GM12878 (cell line): ENCODE measurements at regions of chr19 and their contacts with region 1.

Region 1: DNA sequence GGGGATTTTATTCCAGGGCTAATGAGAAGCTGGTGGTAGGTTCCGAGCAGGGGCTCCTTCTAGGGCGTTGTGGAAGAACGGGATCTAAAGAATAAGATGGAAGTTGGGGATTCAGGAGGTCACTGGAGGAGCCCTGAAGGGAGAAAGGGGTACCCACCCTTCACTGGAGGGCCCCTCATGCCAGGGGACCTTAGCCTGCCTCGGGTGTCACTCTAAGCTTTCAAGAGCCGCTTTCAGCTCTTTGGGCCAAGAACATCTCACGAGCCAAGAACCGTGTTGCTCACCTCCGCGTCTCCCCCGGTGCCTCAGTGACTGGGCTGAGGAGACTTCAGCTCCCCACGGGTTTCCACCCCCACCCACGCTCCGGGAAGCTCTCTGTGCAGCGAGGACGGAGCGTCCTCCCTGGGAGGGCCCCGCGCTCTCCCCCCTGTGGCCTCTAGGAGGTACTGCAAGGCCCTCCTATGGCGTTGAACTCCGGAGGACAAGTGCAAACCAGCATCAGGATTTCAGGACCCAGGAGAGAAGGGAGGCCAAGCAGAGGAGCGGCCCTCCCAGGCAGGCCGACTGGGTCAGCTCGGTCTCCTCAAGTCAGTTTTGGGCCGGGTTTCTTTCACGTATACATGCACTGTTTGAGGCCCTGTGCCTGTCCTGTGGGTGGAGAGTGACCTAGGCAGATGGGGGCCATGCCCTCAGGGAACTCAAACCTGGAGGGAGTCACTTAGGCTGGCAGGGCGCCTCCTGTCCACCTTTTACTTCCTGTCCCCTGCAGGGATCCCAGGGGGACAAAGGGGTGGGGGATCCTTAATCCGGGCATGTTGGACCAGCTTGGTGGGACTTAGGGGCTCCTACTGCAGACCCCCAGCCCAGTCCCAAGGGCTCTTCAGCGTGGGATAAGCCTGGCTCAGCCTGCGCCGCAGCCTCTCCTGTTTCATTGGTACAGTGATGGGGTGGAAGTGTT is 5.1 kb upstream of the KRTDAP start:
- DNase-seq: no peak
- ATAC-seq: peak; percentile 98
- H3K4me3 ChIP-seq: no peak overlapping the region
- H3K27ac ChIP-seq: no peak overlapping the region
- H3K4me1 ChIP-seq: peaks cover 9% of the 10 kb centered on the region
- H3K27me3 ChIP-seq: peaks cover 0 to 2% of the 10 kb centered on the region in 2 experiments; a peak in 1 of 4 replicates
- CTCF ChIP-seq: peak; percentile 96 to 100 (median 98)
- EP300 ChIP-seq: no peak
- POLR2A ChIP-seq: no peak
- RAD21 ChIP-seq: peak; percentile 88

Region 2: DNA sequence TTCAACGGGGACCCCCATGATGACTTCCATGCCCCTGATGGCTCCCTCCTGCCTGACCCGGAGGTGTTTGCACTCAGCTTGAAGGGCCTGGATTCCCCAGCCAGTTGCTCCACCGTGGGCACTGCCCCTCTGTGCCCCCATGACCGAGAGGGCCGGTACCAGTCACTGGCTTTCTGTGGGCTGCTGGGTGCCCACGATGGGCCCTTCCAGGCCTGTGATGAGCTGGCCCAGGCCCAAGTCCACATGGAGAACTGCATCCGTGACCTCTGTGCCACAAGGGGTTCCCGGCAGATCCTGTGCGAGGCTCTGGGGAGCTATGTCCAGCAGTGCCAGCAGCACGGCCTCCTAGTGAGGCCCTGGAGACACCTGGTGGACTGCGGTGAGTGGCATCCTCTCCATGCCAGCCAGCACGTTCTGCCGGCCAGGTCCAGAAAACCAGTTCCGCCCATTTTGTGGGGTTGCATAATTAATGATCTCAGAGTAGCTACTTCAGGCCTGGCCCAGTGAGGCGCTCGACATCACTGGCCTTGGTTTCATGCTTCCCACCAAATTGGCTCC is 414.7 kb before region 1 on chr19:
- CTCF ChIA-PET with region 1: no interaction called
- POLR2A ChIA-PET with region 1: no interaction called
- RAD21 ChIA-PET with region 1: no interaction called
- SMC1A ChIA-PET with region 1: no interaction called
- in situ Hi-C with region 1: no loop called
- intact Hi-C with region 1: no loop called
- DNase-seq: no peak
- ATAC-seq: no peak
- H3K4me3 ChIP-seq: no peak overlapping the region
- H3K27ac ChIP-seq: no peak overlapping the region
- H3K4me1 ChIP-seq: peaks cover 9% of the 10 kb centered on the region
- H3K27me3 ChIP-seq: no peaks in the 10 kb centered on the region; a peak in 1 of 4 replicates
- CTCF ChIP-seq: no peak
- EP300 ChIP-seq: no peak
- POLR2A ChIP-seq: no peak
- RAD21 ChIP-seq: no peak

Region 3: DNA sequence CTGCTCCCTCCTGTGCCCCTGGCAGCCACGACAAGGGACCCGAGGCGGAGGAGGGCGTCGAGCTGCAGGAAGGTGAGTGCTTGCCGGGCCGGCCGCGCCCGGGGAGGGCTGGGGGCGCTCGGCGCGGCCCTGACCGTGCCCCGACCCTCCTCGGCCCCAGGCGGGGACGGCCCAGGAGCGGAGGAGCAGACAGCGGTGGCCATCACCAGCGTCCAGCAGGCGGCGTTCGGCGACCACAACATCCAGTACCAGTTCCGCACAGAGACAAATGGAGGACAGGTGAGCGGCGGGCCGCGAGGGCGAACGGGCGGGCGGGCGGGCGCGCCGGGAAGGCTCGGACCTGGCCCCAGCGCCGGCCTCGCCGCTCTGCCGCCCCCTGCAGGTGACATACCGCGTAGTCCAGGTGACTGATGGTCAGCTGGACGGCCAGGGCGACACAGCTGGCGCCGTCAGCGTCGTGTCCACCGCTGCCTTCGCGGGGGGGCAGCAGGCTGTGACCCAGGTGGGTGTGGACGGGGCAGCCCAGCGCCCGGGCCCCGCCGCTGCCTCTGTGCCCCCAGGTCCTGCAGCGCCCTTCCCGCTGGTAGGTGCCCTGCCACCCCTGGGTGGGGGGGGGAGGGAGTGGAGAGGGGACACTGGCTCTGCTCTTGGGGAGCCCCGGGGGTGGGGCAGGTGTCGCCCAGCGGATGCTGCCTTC is 225.8 kb before region 1 on chr19:
- CTCF ChIA-PET with region 1: interaction called, 9 read pairs
- POLR2A ChIA-PET with region 1: no interaction called
- RAD21 ChIA-PET with region 1: no interaction called
- SMC1A ChIA-PET with region 1: no interaction called
- in situ Hi-C with region 1: no loop called
- intact Hi-C with region 1: loop called (anchors 10 kb)
- DNase-seq: peak; percentile 51
- ATAC-seq: peak; percentile 86
- H3K4me3 ChIP-seq: peak overlapping the region; percentile 71
- H3K27ac ChIP-seq: peak overlapping the region; percentile 83
- H3K4me1 ChIP-seq: peaks cover 17% of the 10 kb centered on the region
- H3K27me3 ChIP-seq: no peaks in the 10 kb centered on the region
- CTCF ChIP-seq: peak; percentile 39 to 66 (median 66)
- EP300 ChIP-seq: no peak
- POLR2A ChIP-seq: peak; percentile 71
- RAD21 ChIP-seq: peak; percentile 70

Region 4: DNA sequence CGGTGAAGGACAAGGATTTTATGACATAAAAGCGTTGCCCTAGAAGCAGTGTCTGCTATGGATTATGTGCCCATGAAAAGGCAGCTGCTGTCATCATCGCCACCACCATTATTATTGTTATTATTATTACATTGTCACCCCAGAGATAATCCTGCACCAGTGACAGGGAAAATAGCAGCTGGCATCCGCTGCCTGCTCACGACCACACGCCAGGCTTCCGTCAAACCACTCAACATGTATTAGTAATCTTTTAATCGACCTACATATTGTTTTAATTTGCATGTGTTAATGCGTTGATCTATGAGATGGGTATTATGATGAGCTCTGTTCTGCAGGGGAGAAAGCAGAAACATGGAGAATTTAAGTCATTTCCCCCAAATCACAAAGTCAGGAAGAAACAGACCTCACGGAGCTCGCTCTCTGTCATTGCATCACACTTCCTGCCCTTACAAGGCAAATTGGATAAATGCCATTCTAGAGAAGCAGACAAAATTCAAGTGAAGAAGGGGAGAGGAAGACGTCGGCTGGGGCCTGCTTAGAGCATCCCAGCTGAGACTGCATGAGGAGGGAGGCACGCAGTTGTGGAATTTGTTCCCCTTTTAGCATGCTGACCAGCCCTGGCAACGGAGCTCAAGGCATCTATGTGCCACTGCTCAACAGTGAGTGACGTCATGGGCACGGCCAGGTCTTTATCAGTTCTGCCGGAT is 137.4 kb before region 1 on chr19 and contains the start of gene FFAR3:
- CTCF ChIA-PET with region 1: interaction called, 111 read pairs
- POLR2A ChIA-PET with region 1: interaction called, 13 read pairs
- RAD21 ChIA-PET with region 1: interaction called, 41 read pairs
- SMC1A ChIA-PET with region 1: interaction called, 44 read pairs
- in situ Hi-C with region 1: no loop called
- intact Hi-C with region 1: no loop called
- DNase-seq: no peak
- ATAC-seq: no peak
- H3K4me3 ChIP-seq: no peak within 1 kb of the TSS
- H3K27ac ChIP-seq: no peak within 1 kb of the TSS
- H3K4me1 ChIP-seq: peaks cover 21% of the 10 kb centered on the region
- H3K27me3 ChIP-seq: 0 out of 4 replicates have a peak, but pooled peaks cover 0 to 2% of the 10 kb centered on the region in 2 experiments
- CTCF ChIP-seq: no peak
- EP300 ChIP-seq: no peak
- POLR2A ChIP-seq: no peak
- RAD21 ChIP-seq: no peak
- polyA plus RNA-seq, gene FFAR3: not detected

Region 5: DNA sequence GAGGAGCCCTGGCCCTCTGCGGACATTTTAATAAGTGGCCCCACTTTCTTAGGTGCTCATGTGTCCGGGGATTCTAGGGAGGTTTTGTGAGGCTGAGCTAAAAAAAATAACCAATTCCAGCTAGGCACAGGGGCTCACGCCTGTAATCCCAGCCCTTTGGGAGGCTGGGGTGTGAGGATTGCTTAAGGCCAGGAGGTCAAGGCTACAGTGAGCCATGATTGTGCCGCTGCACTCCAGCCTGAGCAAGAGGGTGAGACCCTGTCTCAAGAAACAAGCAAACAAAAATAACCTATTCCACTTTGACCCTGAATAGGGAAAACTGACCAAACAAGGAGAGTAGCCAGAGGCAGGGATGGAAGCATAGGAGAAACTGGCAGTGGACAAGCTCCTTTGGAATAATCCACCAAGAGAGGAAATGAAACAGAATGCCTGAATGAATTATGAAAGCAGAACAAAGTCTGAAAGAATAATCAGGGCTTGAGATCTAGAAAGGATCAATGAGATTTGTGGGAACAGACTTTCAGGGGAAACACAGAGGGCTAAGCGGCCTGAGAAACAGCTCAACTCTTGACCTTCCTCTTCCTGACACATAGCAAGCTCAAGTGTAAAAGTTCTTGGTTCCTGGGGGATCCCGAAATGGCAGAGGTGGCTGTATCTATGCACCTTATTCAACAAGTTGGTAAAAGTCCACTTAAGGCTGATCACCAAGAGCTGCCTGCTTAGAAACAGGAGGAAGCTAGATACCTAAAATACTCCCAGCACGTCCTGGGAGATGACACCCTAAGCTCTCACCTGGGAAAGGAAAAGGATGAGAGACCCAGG is 77.5 kb before region 1 on chr19:
- CTCF ChIA-PET with region 1: interaction called, 13 read pairs
- POLR2A ChIA-PET with region 1: interaction called, 3 read pairs
- RAD21 ChIA-PET with region 1: interaction called, 11 read pairs
- SMC1A ChIA-PET with region 1: interaction called, 7 read pairs
- in situ Hi-C with region 1: no loop called
- intact Hi-C with region 1: no loop called
- DNase-seq: peak; percentile 88
- ATAC-seq: peak; percentile 63
- H3K4me3 ChIP-seq: no peak overlapping the region; the same call in 1 of the 2 replicates
- H3K27ac ChIP-seq: peak overlapping the region; percentile 68
- H3K4me1 ChIP-seq: peaks cover 41% of the 10 kb centered on the region
- H3K27me3 ChIP-seq: no peaks in the 10 kb centered on the region
- CTCF ChIP-seq: no peak
- EP300 ChIP-seq: peak; percentile 55 to 60; a peak in 2 of 4 replicates
- POLR2A ChIP-seq: no peak
- RAD21 ChIP-seq: peak; percentile 15; the same call in 1 of the 2 replicates

Region 6: DNA sequence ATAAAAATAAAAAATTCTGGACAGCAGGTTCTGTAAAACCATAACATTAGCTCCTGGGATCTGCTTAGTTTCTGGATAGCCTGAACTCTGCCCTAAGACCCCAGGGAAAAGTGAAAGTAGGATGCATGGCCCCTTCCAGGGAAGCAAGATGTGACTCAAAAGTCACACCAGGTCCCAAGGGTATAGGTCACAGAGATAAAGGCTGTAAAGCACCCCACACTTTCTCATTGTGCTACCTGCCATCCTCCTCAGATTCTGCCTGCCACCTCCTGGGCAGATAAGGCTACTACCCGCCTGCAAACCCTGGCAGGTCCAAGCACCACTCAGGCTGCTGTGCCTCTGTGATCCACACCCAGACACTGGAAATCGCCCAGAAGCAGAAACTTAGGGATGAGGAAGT is 26.7 kb before region 1 on chr19:
- CTCF ChIA-PET with region 1: interaction called, 56 read pairs
- POLR2A ChIA-PET with region 1: interaction called, 3 read pairs
- RAD21 ChIA-PET with region 1: interaction called, 17 read pairs
- SMC1A ChIA-PET with region 1: interaction called, 29 read pairs
- in situ Hi-C with region 1: no loop called
- intact Hi-C with region 1: loop called (anchors 2 kb)
- DNase-seq: peak; percentile 82
- ATAC-seq: peak; percentile 100
- H3K4me3 ChIP-seq: no peak overlapping the region
- H3K27ac ChIP-seq: 0 out of 2 replicates have a peak overlapping the region, but pooled peaks have one; percentile 6
- H3K4me1 ChIP-seq: peaks cover 9% of the 10 kb centered on the region
- H3K27me3 ChIP-seq: no peaks in the 10 kb centered on the region
- CTCF ChIP-seq: peak; percentile 85 to 96 (median 93); a peak in 5 of 6 replicates
- EP300 ChIP-seq: peak in 1 of 2 experiments; percentile 65; a peak in 2 of 4 replicates
- POLR2A ChIP-seq: no peak
- RAD21 ChIP-seq: peak; percentile 99

Region 7: GRCh38 chr19:35484252-35485036 is 10.9 kb before region 1 on chr19:
- CTCF ChIA-PET with region 1: interaction called, 55 read pairs
- POLR2A ChIA-PET with region 1: interaction called, 10 read pairs
- RAD21 ChIA-PET with region 1: interaction called, 15 read pairs
- SMC1A ChIA-PET with region 1: interaction called, 21 read pairs
- in situ Hi-C with region 1: no loop called
- intact Hi-C with region 1: no loop called
- DNase-seq: peak; percentile 85
- ATAC-seq: peak; percentile 99
- H3K4me3 ChIP-seq: no peak overlapping the region
- H3K27ac ChIP-seq: 0 out of 2 replicates have a peak overlapping the region, but pooled peaks have one; percentile 17
- H3K4me1 ChIP-seq: peaks cover 14% of the 10 kb centered on the region
- H3K27me3 ChIP-seq: no peaks in the 10 kb centered on the region
- CTCF ChIP-seq: no peak
- EP300 ChIP-seq: 0 out of 4 replicates have a peak, but pooled peaks of 1 of the 2 experiments have one; percentile 33
- POLR2A ChIP-seq: no peak
- RAD21 ChIP-seq: no peak

Region 8: DNA sequence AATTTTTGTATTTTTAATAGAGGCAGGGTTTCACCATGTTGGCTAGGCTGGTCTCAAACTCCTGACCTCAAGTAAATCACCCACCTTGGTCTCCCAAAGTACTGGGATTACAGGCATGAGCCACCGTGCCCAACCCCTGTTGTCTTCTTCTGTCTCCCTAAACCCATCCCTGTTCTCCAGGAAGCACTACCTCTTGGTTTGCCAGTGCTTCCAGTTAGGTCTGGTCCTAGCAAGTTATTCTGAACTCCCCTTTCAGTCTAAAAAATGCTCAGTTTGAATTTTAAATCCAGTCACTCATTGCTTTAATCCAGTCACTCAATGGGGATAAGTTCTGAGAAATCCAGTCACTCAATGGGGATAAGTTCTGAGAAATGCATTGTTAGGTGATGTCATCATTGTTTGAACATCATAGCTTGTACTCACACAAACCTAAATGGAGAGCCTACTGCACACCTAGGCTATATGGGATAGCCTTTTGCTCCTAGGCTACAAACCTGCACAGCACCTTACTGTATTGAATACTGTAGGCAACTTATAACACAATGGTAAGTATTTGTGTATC is 76.1 kb after region 1 on chr19:
- CTCF ChIA-PET with region 1: no interaction called
- POLR2A ChIA-PET with region 1: no interaction called
- RAD21 ChIA-PET with region 1: no interaction called
- SMC1A ChIA-PET with region 1: no interaction called
- in situ Hi-C with region 1: no loop called
- intact Hi-C with region 1: no loop called
- DNase-seq: no peak
- ATAC-seq: no peak
- H3K4me3 ChIP-seq: no peak overlapping the region
- H3K27ac ChIP-seq: no peak overlapping the region
- H3K4me1 ChIP-seq: no peaks in the 10 kb centered on the region
- H3K27me3 ChIP-seq: peaks cover 2 to 4% of the 10 kb centered on the region in 2 experiments; a peak in 1 of 4 replicates
- CTCF ChIP-seq: no peak
- EP300 ChIP-seq: no peak
- POLR2A ChIP-seq: no peak
- RAD21 ChIP-seq: no peak

Region 9: GRCh38 chr19:35592226-35592625 is 96.8 kb after region 1 on chr19:
- CTCF ChIA-PET with region 1: interaction called, 12 read pairs
- POLR2A ChIA-PET with region 1: no interaction called
- RAD21 ChIA-PET with region 1: no interaction called
- SMC1A ChIA-PET with region 1: no interaction called
- in situ Hi-C with region 1: no loop called
- intact Hi-C with region 1: no loop called
- DNase-seq: no peak
- ATAC-seq: no peak
- H3K4me3 ChIP-seq: no peak overlapping the region
- H3K27ac ChIP-seq: no peak overlapping the region
- H3K4me1 ChIP-seq: no peaks in the 10 kb centered on the region; the same call in none of the 2 replicates
- H3K27me3 ChIP-seq: no peaks in the 10 kb centered on the region
- CTCF ChIP-seq: peak; percentile 64 to 74 (median 70); a peak in 5 of 6 replicates
- EP300 ChIP-seq: no peak
- POLR2A ChIP-seq: no peak
- RAD21 ChIP-seq: peak; percentile 84

Region 10: GRCh38 chr19:35721374-35721773 is 226.0 kb after region 1 on chr19:
- CTCF ChIA-PET with region 1: no interaction called
- POLR2A ChIA-PET with region 1: no interaction called
- RAD21 ChIA-PET with region 1: no interaction called
- SMC1A ChIA-PET with region 1: no interaction called
- in situ Hi-C with region 1: no loop called
- intact Hi-C with region 1: no loop called
- DNase-seq: no peak
- ATAC-seq: no peak
- H3K4me3 ChIP-seq: no peak overlapping the region
- H3K27ac ChIP-seq: no peak overlapping the region
- H3K4me1 ChIP-seq: peaks cover 10% of the 10 kb centered on the region
- H3K27me3 ChIP-seq: no peaks in the 10 kb centered on the region
- CTCF ChIP-seq: no peak
- EP300 ChIP-seq: no peak
- POLR2A ChIP-seq: peak; percentile 52
- RAD21 ChIP-seq: no peak

Region 11: DNA sequence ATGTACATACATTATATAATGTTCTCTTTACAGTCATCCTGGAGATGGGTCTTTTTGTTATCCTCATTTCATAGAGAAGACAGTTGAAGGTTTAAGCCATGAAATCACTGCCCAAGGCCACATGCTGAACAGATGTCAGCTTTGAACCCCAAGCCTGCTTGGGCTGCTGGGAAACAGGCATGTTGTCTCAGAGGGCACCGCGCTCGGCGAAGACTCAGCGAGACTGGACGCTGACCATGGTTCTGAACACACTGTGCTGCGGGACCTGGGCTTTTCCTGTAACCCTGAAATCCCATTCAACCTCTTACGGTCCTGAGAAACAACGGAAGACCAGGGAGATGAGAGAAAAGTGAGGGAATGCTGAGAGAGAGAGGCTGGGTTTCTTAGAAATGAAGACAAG is 468.1 kb after region 1 on chr19:
- CTCF ChIA-PET with region 1: no interaction called
- POLR2A ChIA-PET with region 1: no interaction called
- RAD21 ChIA-PET with region 1: no interaction called
- SMC1A ChIA-PET with region 1: no interaction called
- in situ Hi-C with region 1: no loop called
- intact Hi-C with region 1: no loop called
- DNase-seq: no peak
- ATAC-seq: no peak
- H3K4me3 ChIP-seq: no peak overlapping the region
- H3K27ac ChIP-seq: no peak overlapping the region
- H3K4me1 ChIP-seq: no peaks in the 10 kb centered on the region
- H3K27me3 ChIP-seq: peaks cover 7 to 13% of the 10 kb centered on the region in 2 experiments
- CTCF ChIP-seq: no peak
- EP300 ChIP-seq: no peak
- POLR2A ChIP-seq: no peak
- RAD21 ChIP-seq: no peak